ENCODE measurements at regions of chr6 and their contacts with region 1.

Region 1: GRCh38 chr6:157079771-157080170 is 243.5 kb downstream of the TMEM242 start:
- DNase-seq: no peak
- ATAC-seq: peak; percentile 15
- H3K4me3 Mint-ChIP-seq: no peak overlapping the region
- H3K27ac Mint-ChIP-seq: peak overlapping the region; percentile 37
- H3K4me1 Mint-ChIP-seq: peaks cover 82% of the 10 kb centered on the region
- H3K27me3 Mint-ChIP-seq: no peaks in the 10 kb centered on the region
- CTCF ChIP-seq: no peak

Region 2: DNA sequence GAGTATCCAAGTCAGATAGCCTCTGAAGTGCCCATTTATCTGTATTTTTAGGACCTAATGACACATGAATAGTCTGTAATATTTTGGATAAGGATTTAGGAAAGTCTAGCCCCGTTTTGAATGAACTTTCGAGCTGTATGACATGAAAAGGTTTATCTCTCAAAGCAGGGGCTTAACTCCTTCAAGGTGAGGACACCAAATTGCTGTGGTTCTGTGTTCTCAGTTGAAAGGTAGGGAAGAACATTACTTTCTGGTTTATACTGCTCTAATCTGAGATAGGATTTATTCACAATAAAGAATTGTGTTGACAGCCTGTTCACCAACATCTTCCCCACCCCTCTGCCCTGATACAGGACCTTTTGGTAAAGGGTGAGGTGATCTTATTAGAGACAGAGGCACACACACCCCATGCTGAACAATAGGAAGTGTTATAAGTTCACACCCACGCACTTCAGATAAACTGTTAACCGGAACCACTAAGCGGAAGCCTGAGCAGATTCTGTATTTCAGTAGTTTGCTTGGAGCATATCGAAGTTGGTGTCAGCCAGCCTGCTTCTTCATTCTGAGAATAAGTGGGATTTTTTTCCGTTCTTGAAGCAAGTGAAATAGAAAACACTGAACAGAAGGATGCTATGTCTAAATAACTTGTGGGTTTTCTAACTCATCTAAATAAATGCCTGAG is 20.3 kb after region 1 on chr6:
- CTCF ChIA-PET with region 1: no interaction called
- POLR2A ChIA-PET with region 1: interaction called, 3 read pairs
- intact Hi-C with region 1: loop called (anchors 1 kb)
- DNase-seq: no peak
- ATAC-seq: peak; percentile 94
- H3K4me3 Mint-ChIP-seq: peak overlapping the region; percentile 44
- H3K27ac Mint-ChIP-seq: peak overlapping the region; percentile 78
- H3K4me1 Mint-ChIP-seq: peaks cover 60% of the 10 kb centered on the region
- H3K27me3 Mint-ChIP-seq: no peaks in the 10 kb centered on the region
- CTCF ChIP-seq: no peak

Measured in activated B cell treated with CpG ODN at 0.5 μM for 24 hours (primary cell).